Naive thymus-derived CD8-positive, alpha-beta T cell (primary cell): ENCODE measurements at regions of chr18 and their contacts with region 1.

Region 1: DNA sequence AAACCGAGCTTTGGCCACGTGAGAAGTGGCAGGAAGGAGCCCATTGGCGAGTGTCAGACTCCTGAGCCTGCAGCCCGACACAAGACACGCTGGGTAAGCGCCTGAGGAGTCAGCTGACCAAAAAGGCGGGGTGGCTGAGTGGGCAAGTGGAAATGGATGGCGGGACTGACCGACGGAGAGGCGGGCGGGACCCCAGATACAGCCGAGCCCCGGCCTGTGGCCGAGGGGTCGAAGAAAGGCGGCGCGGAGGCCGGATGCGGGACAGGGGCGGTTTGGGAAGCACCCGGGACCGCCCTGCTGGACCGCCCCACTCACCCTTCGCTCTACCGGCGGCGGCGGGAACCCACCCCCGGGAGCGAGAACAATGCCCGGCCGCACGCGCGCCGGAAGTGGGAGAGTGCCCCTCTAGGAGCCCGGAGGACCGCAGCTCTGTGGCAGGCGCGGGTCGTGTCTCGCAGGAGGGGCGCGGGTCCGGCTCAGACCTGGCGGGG is 22.8 kb downstream of the ZSCAN30 start:
- DNase-seq: peak; percentile 54 to 86 (median 64)
- ATAC-seq: peak; percentile 82 to 87
- H3K4me3 Mint-ChIP-seq: peak overlapping the region; percentile 92 to 99 (median 97)
- H3K27ac Mint-ChIP-seq: peak overlapping the region; percentile 96 to 99 (median 98)
- H3K4me1 Mint-ChIP-seq: peaks cover 24 to 33% (median 28%) of the 10 kb centered on the region in 4 donors
- H3K27me3 Mint-ChIP-seq: no peaks in the 10 kb centered on the region

Region 2: GRCh38 chr18:35185771-35186170 is 81.4 kb before region 1 on chr18:
- POLR2A ChIA-PET with region 1: no interaction called
- DNase-seq: no peak
- ATAC-seq: no peak
- H3K4me3 Mint-ChIP-seq: no peak overlapping the region
- H3K27ac Mint-ChIP-seq: no peak overlapping the region
- H3K4me1 Mint-ChIP-seq: no peaks in the 10 kb centered on the region
- H3K27me3 Mint-ChIP-seq: peaks cover 0 to 4% (median 0%) of the 10 kb centered on the region in 5 donors

Region 3: GRCh38 chr18:35215026-35215425 is 52.2 kb before region 1 on chr18:
- POLR2A ChIA-PET with region 1: no interaction called
- DNase-seq: no peak
- ATAC-seq: no peak
- H3K4me3 Mint-ChIP-seq: no peak overlapping the region
- H3K27ac Mint-ChIP-seq: peak overlapping the region in 1 of 10 donors; percentile 64
- H3K4me1 Mint-ChIP-seq: no peaks in the 10 kb centered on the region
- H3K27me3 Mint-ChIP-seq: peaks cover 0 to 7% (median 0%) of the 10 kb centered on the region in 5 donors

Region 4: DNA sequence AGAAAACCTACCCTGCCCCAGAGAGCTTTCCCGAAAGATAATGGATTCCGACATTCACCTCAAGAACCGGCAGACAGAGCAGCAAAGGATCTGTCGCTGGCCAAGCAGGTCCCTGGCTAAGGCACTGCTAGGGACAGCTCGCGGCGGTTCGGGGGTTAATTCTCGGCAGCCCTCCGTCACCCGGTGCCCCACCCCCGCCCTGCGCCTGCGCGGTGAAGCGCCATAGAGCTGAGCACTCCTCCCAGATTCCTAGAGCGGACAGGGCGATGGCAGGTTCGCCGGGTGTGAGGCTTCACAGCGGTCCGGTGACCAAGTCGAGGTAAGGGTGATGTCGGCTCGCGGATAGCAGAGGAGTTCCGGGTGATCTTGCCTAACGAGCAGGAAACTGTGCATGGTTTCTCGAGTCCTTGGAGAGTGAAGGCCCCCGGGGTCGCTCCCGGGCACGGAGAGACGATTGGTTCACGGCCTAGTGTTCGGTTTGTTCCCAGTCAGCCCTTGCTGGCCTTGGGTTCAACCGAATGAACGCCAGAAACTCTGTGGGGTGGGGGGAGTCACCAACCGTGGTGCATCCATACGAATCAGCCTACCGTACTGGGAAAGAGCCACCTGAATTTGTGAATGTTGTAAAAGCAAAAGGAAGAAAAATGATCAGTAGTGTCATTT is 23.0 kb after region 1 on chr18 and contains the start of gene ZSCAN30:
- POLR2A ChIA-PET with region 1: interaction called, 59 read pairs
- DNase-seq: peak; percentile 92 to 97 (median 94)
- ATAC-seq: peak; percentile 94
- H3K4me3 Mint-ChIP-seq: peak within 1 kb of the TSS; percentile 91 to 100 (median 99)
- H3K27ac Mint-ChIP-seq: peak within 1 kb of the TSS; percentile 96 to 100 (median 99)
- H3K4me1 Mint-ChIP-seq: peaks cover 32 to 80% (median 76%) of the 10 kb centered on the region in 4 donors
- H3K27me3 Mint-ChIP-seq: peaks cover 0 to 1% (median 0%) of the 10 kb centered on the region in 5 donors
- polyA plus RNA-seq, gene ZSCAN30: 4.3 to 7.5 (median 5.2) TPM

Region 5: DNA sequence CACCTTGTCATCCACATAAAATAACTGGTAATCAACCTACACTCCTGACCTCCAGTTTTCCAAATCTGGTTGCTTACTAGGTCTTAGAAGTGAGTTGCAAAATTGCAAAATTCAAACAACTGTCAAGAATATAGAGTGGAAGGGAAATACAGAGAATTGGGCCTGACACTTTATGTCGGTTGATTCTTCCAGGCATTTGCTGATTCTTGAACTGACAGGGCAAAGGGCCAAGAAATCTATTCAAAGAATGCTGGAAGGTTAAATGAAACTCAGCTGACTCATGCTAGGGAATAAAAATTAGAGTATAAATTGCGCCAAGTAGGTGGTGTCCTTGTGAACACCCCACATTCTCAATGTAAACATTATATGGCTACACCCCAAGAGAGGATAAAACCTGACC is 44.3 kb after region 1 on chr18:
- POLR2A ChIA-PET with region 1: no interaction called
- DNase-seq: no peak
- ATAC-seq: no peak
- H3K4me3 Mint-ChIP-seq: no peak overlapping the region
- H3K27ac Mint-ChIP-seq: no peak overlapping the region
- H3K4me1 Mint-ChIP-seq: peaks cover 0 to 1% (median 0%) of the 10 kb centered on the region in 4 donors
- H3K27me3 Mint-ChIP-seq: no peaks in the 10 kb centered on the region

Region 6: DNA sequence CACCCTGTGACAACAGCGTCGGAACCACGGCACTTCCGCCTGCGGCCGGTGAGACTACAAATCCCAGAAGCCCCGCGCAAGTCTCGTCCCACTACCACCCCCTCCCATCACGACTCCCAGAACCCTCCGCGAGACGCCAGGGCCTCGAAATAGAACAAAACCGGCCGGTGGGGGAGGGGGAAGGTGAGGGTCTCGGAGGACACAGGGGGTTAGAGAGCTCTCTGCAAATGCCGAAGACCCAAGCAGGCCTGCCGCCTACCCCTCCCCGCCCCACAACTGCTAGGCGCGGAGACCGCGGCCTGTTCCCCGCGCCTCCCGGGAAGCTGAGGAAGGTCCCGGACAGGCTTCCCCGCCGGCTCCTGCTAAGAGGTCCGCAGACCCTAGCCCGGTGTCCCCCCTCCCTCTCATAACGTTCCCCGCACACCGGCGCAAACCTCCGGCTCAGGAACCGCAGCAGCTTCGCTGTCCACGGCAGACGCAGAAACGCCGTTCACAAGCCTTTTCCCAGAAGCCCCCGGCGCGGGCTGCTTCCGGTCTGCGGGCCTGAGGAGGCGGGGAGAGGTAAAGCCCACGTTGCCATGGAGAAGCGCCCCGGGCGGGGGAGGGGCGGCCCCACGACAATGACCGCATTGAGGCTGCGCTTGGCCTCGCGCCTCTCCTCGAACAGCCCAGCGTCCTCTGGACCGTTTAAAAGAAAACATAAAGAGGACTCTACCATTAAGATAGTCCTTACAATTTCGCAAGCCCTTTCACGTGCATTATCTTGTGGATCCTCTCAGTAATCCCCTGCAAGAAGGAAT is 76.9 kb after region 1 on chr18 and contains the start of gene ZNF24:
- POLR2A ChIA-PET with region 1: interaction called, 26 read pairs
- DNase-seq: peak; percentile 86 to 96 (median 90)
- ATAC-seq: peak; percentile 84 to 87
- H3K4me3 Mint-ChIP-seq: peak within 1 kb of the TSS; percentile 95 to 100 (median 98)
- H3K27ac Mint-ChIP-seq: peak within 1 kb of the TSS; percentile 92 to 99 (median 98)
- H3K4me1 Mint-ChIP-seq: peaks cover 19 to 65% (median 48%) of the 10 kb centered on the region in 4 donors
- H3K27me3 Mint-ChIP-seq: no peaks in the 10 kb centered on the region
- polyA plus RNA-seq, gene ZNF24: 78.0 to 92.9 (median 90.2) TPM

Region 7: DNA sequence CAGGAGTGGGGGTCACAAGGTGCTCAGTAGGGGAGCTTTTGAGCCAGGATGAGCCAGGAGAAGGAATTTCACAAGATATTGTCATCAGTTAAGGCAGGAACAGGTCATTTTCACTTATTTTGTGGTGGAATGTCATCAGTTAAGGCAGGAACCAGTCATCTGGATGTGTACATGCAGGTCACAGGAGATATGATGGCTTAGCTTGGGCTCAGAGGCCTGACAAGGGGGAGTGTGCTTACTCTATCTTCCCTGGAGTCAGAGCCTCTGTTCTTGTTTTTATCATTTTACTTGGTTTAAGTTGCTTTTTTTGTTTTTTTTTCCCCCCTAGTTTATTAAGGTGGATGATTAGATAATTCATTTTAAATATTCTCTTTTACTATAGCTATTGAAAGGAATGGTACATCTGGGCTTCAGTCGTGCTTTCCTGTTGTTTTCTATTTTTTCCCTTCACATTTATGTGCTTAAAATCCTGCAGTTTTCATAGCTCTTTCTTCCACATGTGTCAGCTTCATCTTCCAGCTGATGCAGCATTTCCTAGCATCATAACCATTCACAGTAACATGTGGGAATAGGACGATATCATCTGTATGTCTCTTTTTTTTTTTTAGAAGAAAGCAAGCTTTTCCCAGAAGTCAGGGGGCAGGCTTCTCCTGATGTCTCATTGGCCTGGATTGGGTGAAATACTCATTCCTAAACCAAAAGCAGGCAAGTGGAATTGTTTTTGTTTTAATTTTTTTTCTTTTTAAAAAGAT is 94.5 kb after region 1 on chr18:
- POLR2A ChIA-PET with region 1: no interaction called
- DNase-seq: no peak
- ATAC-seq: no peak
- H3K4me3 Mint-ChIP-seq: no peak overlapping the region
- H3K27ac Mint-ChIP-seq: no peak overlapping the region
- H3K4me1 Mint-ChIP-seq: no peaks in the 10 kb centered on the region
- H3K27me3 Mint-ChIP-seq: peaks cover 0 to 17% (median 2%) of the 10 kb centered on the region in 5 donors